Mammary epithelial cell (primary cell): ENCODE measurements at regions of chr16 and their contacts with region 1.

Region 1: DNA sequence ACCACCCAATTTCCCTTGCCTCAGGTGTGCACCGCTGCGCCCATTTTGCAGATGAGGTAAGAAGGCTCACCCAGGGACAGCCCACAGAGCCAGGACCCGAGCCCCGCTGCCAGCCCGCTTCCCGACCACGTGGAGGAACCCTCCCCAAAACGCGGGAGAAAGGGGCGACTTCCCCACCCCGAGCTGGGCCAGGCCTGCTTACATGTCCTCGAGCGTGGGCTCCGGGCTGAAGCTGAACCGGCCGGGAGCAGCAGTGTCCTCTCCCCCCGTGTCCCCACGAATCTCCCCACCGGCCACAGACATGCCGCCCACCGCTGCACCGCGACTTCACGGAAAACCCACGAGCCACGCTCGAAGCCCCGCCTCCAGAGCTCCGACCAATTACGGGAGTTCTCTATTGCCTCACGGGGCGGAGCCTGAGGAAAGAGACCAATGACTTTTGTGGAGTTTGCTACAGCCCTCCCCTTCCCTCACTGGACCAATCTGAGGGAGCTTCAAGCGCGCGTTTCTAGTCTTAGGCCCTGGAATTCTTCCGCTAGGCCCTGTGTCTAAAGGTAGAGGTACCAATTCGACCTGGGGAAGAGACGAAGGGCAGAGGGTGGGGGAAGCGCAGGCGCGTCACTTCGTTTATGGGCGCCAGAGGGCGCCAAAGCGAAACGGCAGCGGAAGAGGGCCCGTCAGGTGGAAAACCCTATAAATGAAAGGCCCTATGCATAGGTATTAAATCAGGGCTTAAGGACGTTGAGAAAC is at the start of gene DCTPP1:
- DNase-seq: peak; percentile 99
- H3K4me3 ChIP-seq: peak within 1 kb of the TSS; percentile 66 to 88 (median 79)
- H3K27ac ChIP-seq: peak within 1 kb of the TSS; percentile 44
- H3K4me1 ChIP-seq: peaks cover 13% of the 10 kb centered on the region
- H3K27me3 ChIP-seq: no peaks in the 10 kb centered on the region
- CTCF ChIP-seq: peak; percentile 79 to 93
- total RNA-seq, gene DCTPP1: 23.3 to 72.8 TPM

Region 2: DNA sequence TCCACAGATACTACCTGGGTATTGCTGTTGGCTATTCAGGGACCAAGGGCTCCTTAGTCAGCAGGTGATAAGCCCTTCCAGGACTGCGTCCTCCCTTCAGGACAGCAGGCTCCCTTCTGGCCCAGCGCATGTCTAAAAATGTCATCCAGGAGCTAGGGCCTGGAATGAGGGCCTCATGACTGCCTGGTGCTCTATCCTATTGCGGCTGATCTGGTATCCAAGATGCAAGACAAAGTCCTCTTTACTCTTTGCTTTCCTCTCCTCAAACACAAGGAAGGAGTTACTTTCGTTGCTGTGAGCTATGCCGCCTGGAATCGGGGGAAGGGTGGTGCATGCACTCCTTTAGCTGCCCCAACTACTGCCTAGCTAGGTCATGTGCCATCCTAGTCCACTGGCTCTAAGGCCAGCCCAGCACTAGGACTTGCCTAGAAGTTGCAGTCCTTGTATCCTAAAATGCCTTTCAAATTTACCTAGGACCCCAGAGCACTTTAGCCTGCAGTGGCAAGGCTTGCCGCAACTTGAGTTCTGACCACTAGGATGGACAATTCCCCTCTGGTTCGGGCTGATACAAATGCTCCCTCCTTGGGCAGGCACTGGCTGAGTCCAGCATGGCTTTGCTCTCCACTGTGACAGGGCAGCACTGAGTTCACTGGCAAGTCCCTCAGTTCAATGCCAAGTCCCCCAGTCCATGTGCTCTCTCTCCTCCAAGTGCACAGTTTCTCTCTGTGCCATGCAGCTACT is 478.1 kb before region 1 on chr16:
- CTCF ChIA-PET with region 1: no interaction called
- dilution Hi-C with region 1: no loop called
- in situ Hi-C with region 1: no loop called
- intact Hi-C with region 1: no loop called
- DNase-seq: no peak
- H3K4me3 ChIP-seq: no peak overlapping the region
- H3K27ac ChIP-seq: no peak overlapping the region
- H3K4me1 ChIP-seq: no peaks in the 10 kb centered on the region
- H3K27me3 ChIP-seq: no peaks in the 10 kb centered on the region
- CTCF ChIP-seq: no peak

Region 3: GRCh38 chr16:30370444-30371247 is 59.2 kb before region 1 on chr16 and contains the start of gene TBC1D10B:
- CTCF ChIA-PET with region 1: interaction called, 4 read pairs
- dilution Hi-C with region 1: no loop called
- in situ Hi-C with region 1: loop called in 1 of 2 experiments (anchors 10 kb)
- intact Hi-C with region 1: no loop called
- DNase-seq: peak; percentile 100
- H3K4me3 ChIP-seq: peak within 1 kb of the TSS; percentile 74 to 79 (median 75)
- H3K27ac ChIP-seq: peak within 1 kb of the TSS; percentile 36
- H3K4me1 ChIP-seq: peaks cover 13% of the 10 kb centered on the region
- H3K27me3 ChIP-seq: no peaks in the 10 kb centered on the region
- CTCF ChIP-seq: peak in 1 of 2 donors; percentile 36
- total RNA-seq, gene TBC1D10B: 27.3 to 45.5 TPM

Region 4: DNA sequence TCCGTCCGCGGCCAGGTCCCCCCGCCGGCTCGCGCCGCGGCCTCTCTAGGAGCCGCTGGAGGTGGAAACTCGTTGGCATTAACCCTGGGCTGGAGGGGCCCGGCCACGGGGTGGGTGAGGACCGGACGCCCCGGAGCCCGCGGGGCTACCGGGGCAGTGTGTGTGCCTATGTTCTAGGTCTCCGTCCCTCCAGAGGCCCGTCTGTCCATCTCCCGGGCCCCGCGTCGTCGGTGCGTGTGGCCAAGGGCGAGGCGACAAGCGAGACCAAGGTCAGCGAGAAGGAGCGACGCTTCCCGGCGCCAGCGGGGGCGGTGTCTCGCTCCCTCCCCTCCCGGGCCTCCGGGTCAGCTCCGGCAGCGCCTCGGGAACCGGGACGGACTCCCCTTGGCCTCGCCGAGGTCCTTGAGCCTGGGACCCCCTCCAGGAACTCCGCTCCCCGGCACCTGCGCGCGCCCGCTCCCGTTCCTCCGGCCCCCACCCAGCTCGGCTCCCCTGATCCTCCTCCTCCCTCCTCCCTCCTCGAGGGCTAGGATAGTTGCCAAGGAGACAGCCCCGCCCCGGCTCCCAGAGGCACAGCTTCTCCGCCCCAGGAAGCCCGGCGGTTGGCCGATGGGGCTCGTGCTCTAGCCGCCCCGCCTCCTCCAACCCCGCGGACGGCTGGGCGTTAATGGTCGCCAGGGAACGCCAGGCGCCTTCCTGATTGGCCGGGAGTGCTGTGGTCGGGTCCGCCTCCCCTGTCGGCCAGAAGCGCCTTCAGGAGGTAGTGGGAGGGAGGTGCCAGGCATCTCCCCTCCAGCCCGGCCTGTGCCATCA is 97.2 kb after region 1 on chr16:
- CTCF ChIA-PET with region 1: no interaction called
- dilution Hi-C with region 1: no loop called
- in situ Hi-C with region 1: no loop called
- intact Hi-C with region 1: loop called (anchors 1 kb)
- DNase-seq: peak; percentile 98
- H3K4me3 ChIP-seq: peak overlapping the region; percentile 65 to 96 (median 90)
- H3K27ac ChIP-seq: peak overlapping the region; percentile 88
- H3K4me1 ChIP-seq: peaks cover 18% of the 10 kb centered on the region
- H3K27me3 ChIP-seq: no peaks in the 10 kb centered on the region
- CTCF ChIP-seq: peak in 1 of 2 donors; percentile 42

Region 5: DNA sequence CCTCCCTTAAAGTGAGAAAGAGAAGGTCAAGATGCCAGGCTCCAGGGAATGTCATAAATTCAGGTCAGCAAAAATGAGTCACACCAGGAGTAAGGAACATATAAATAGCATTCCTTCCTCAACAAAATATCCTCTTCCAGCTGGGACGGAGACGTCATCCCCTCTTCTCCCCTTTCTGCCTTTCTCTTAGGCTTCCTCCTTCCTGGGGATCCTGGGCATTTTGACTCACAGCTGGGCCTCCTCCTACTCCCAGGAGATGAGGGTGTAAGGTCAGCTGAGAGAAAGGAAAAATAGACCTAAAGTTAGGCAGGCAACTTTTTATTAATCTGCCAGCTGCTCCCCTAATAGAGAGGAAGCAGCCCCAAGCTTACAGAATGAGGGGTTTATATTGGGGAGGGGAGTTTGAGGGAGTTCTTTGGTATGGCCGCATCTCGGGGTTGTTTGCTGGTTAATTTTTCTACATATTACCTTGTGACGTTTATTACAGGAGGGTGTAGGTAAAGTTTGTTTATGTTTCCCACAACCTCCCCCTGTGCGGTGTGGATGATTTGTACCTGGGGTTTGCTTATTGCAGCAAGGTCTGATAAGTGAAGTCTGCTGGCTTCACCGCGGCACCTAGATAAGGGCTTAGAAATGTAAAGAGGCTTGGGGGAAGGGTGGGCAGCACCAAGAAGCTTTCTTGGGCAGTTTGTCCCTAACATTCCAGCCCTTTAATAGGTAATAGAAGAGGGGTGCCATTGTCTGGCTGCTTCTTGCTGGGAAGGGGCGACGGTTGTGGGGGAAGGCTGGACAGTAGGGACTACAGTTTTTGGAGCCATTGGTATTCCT is 111.9 kb after region 1 on chr16:
- CTCF ChIA-PET with region 1: no interaction called
- dilution Hi-C with region 1: loop called (anchors 10 kb)
- in situ Hi-C with region 1: no loop called
- intact Hi-C with region 1: no loop called
- DNase-seq: no peak
- H3K4me3 ChIP-seq: no peak overlapping the region
- H3K27ac ChIP-seq: no peak overlapping the region
- H3K4me1 ChIP-seq: no peaks in the 10 kb centered on the region
- H3K27me3 ChIP-seq: no peaks in the 10 kb centered on the region
- CTCF ChIP-seq: no peak

Region 6: GRCh38 chr16:30585400-30586189 is 155.7 kb after region 1 on chr16 and contains the start of gene ZNF785:
- CTCF ChIA-PET with region 1: no interaction called
- dilution Hi-C with region 1: no loop called
- in situ Hi-C with region 1: no loop called
- intact Hi-C with region 1: loop called (anchors 1 kb)
- DNase-seq: peak; percentile 99
- H3K4me3 ChIP-seq: peak within 1 kb of the TSS; percentile 39 to 69 (median 58)
- H3K27ac ChIP-seq: peak within 1 kb of the TSS; percentile 42
- H3K4me1 ChIP-seq: peaks cover 9% of the 10 kb centered on the region
- H3K27me3 ChIP-seq: no peaks in the 10 kb centered on the region
- CTCF ChIP-seq: peak in 1 of 2 donors; percentile 30
- total RNA-seq, gene ZNF785: 7.6 to 8.0 TPM

Region 7: DNA sequence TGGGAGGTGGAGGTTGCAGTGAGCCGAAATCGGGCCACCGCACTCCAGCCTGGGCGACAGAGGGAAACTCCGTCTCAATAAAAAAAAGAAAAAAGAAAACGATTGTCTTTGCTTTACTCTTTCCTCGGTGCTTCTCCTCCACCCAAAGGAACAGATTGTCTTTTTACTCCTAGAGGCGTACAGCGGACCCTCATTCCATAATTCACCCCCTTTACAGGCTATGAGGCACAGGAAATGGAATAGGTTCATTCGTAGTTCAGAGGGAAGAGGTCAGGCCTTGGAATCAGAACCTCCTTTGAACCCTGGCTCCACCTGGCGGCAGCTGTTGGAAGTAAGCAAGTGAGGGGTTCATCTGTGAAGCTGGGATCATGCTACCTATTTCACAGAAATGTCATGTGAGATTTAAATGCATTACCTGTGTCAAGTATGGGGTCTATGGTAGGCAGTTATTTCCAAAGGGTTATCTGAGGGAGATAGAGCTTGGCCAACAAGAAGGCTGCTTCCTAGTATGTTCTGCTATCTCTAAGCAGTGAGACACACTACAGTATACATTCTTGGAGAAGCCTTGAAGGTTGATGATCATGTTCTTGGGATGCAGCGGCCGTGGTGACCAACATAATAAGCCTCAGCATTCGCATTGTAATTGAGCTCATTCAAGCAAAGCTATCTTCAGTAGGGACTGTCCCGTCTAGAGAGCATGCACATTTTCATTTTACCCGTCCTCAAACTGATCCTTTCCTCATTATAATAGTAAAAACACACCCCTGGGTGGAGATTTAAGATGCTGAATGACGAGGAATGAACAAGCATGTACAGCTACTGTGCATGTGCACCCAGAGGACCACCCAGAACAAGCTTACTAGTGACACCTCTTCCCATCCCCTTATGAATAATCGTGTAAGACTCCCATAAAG is 199.0 kb after region 1 on chr16:
- CTCF ChIA-PET with region 1: no interaction called
- dilution Hi-C with region 1: no loop called
- in situ Hi-C with region 1: loop called in 1 of 2 experiments (anchors 10 kb)
- intact Hi-C with region 1: loop called (anchors 1 kb)
- DNase-seq: peak; percentile 46
- H3K4me3 ChIP-seq: no peak overlapping the region
- H3K27ac ChIP-seq: no peak overlapping the region
- H3K4me1 ChIP-seq: peaks cover 5% of the 10 kb centered on the region
- H3K27me3 ChIP-seq: no peaks in the 10 kb centered on the region
- CTCF ChIP-seq: peak; percentile 97 to 98

Region 8: DNA sequence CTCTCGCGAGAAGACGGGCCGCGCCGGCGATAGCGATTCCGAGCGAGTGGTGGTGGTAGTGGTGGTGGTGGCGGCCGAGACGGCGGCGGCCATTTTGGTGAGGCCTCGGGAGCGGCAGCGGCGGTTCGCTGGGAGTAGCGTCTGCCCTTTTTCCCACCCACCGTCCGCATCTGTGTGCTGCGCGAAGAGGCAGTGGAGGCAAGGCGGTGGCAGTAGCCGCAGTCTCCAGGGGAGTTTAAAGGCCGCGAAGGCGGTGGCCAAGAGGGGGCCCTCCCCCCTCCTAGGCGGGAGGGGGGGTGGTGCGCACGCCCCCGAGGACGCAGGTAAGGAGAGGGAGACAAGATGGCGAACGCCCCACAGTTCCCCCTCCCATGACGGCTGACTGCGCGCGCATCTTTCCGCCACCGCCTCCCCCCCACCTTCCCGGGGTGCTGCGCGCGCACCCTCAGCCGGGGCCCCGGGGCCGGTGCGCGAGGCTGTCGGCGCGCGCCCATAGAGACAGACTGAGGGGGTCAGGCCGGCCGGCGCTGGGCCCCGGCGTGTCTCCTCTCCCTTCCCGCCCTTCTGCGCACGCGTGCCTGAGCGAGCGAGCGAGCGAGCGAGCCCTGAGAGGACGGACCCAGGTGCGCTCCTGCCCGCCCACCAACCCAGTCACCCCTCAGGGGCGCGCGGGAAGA is 268.4 kb after region 1 on chr16:
- CTCF ChIA-PET with region 1: no interaction called
- dilution Hi-C with region 1: no loop called
- in situ Hi-C with region 1: no loop called
- intact Hi-C with region 1: loop called (anchors 10 kb)
- DNase-seq: peak; percentile 96
- H3K4me3 ChIP-seq: peak overlapping the region; percentile 78 to 99 (median 97)
- H3K27ac ChIP-seq: peak overlapping the region; percentile 94
- H3K4me1 ChIP-seq: peaks cover 19% of the 10 kb centered on the region
- H3K27me3 ChIP-seq: no peaks in the 10 kb centered on the region
- CTCF ChIP-seq: no peak